Dorsolateral prefrontal cortex (tissue), 120 donors: ENCODE measurements at regions of chr14 and their contacts with region 1.

Region 1: DNA sequence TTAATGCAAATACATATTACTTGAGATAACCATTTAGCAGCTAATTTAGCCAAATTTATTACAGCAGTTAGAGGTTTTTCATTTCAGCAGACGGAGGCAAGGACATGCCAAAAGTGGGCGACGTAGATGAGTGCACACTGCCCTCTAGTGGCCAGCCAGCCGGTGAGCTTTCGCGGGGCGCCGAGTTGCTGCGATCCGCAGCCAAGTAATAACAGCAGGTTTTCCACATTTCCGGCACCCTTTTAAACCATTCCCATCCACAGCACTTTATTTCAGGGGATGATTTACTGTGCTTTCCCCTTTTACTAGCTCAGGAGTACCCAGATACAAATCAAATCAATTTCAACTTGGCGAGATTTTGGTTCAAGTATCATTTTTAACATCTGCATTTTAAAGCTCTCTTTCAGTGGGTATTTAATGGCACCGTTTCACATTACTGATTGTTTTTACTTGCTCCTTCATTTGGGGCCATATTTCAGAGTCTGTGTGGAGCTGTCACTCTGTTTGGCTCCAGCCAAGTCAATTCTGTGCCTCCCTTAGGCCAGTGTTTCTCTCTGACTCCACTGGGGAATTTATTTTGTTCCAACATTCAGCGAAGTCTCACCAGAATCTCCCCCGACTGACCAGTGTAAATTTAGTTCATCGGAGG is 158.0 kb downstream of the EGLN3 start:
- DNase-seq: peak; percentile 76 to 91 (median 84)
- H3K4me3 ChIP-seq: peak overlapping the region; percentile 14 to 65 (median 44)
- H3K27ac ChIP-seq: peak overlapping the region in 56 of 59 donors; percentile 2 to 89 (median 73)
- H3K27me3 ChIP-seq: no peaks in the 10 kb centered on the region
- CTCF ChIP-seq: peak; percentile 85 to 98 (median 96)

Region 2: DNA sequence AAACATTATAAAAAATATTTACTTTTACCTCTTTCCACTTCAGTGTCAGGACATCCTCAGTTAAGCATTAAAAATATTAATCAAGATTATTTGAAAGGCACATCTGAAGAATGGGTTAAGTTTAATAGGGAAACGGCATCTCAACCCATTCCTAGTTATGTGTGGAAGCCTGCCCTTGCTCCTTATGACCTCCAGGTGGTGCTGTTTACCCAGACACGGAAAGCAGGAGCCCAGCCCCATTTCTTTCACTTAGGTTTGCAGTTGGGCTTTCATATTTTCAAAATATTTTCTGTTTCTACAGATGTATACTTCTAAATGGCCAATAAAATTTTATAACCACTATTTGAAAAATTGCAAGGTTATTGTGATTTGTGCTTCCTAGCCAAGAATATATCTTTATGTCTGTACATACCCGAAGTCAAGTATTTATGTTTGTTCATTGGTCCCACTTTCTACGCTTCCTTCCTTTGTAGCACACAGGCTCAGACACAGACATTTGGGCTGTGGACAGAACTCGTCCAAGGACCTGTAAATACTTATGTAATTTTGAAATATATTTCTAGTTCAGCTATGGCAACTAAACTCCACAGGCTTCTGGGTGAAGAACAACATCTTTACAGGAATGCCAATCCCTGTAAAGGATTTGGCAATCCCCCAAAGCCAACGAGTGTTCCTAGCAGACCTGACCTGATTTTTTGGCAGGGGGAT is 1216.6 kb before region 1 on chr14:
- intact Hi-C with region 1: loop called (anchors 2 to 10 kb)
- DNase-seq: peak in 9 of 10 donors; percentile 31 to 72 (median 52)
- H3K4me3 ChIP-seq: peak overlapping the region in 36 of 59 donors; percentile 3 to 56 (median 32)
- H3K27ac ChIP-seq: peak overlapping the region in 48 of 59 donors; percentile 1 to 84 (median 60)
- H3K27me3 ChIP-seq: no peaks in the 10 kb centered on the region
- CTCF ChIP-seq: peak; percentile 91 to 99 (median 97)

Region 3: DNA sequence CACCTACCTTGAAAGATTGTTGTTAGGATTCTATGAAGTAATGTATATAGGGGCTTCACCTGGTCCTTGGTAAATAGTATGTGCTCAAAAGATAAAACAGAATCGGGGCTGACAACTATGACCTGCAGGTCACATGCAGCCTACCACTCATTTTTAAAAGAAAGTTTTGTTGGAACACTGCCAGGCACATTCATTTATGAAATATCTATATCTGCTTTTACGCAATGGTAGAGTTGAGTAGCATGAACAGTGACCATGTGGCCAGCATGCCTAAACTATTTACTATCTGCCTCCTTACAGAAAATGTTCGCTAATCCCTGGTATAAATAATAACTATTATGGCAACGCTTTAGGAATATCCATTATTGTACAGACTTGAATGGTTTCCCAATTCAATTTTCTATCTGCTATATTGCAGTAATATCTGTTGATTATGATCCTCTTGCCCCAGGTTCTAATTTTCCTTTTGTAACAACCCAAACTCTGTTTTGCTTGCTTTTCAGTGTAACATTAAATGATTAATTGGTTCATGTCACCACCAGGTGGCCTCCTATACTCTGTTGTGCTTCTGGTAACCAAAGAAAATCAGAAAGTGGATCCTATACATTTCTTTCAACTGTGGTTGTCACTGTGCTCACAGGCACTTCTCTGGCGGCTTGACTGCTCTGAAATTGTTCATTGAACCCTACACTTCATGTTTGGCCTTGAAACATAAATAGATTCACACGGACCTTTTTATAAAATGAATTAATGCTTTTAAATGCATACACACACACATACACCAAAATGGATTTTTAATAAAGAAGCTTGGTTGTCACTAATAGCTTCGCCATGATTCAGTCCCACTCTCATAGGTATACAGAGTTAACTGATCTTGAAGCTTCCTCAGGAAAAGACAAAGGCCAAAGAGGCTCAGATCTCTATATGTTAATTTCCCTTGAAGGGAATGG is 1081.8 kb before region 1 on chr14:
- intact Hi-C with region 1: loop called in 1 of 2 experiments (anchors 10 kb)
- DNase-seq: peak in 3 of 10 donors; percentile 25 to 62 (median 40)
- H3K4me3 ChIP-seq: peak overlapping the region in 50 of 59 donors; percentile 0 to 56 (median 28)
- H3K27ac ChIP-seq: peak overlapping the region in 58 of 59 donors; percentile 5 to 91 (median 80)
- H3K27me3 ChIP-seq: no peaks in the 10 kb centered on the region
- CTCF ChIP-seq: peak; percentile 54 to 88 (median 72)

Region 4: GRCh38 chr14:33184587-33184986 is 608.3 kb before region 1 on chr14:
- intact Hi-C with region 1: loop called in 1 of 2 experiments (anchors 5 kb)
- DNase-seq: peak in 1 of 10 donors; percentile 19
- H3K4me3 ChIP-seq: no peak overlapping the region
- H3K27ac ChIP-seq: no peak overlapping the region
- H3K27me3 ChIP-seq: no peaks in the 10 kb centered on the region
- CTCF ChIP-seq: peak in 42 of 56 donors; percentile 12 to 62 (median 37)

Region 5: GRCh38 chr14:33432407-33433023 is 360.3 kb before region 1 on chr14:
- intact Hi-C with region 1: loop called in 1 of 2 experiments (anchors 5 kb)
- DNase-seq: peak in 2 of 10 donors; percentile 42 to 49
- H3K4me3 ChIP-seq: no peak overlapping the region
- H3K27ac ChIP-seq: no peak overlapping the region
- H3K27me3 ChIP-seq: no peaks in the 10 kb centered on the region
- CTCF ChIP-seq: peak in 54 of 56 donors; percentile 5 to 74 (median 54)

Region 6: DNA sequence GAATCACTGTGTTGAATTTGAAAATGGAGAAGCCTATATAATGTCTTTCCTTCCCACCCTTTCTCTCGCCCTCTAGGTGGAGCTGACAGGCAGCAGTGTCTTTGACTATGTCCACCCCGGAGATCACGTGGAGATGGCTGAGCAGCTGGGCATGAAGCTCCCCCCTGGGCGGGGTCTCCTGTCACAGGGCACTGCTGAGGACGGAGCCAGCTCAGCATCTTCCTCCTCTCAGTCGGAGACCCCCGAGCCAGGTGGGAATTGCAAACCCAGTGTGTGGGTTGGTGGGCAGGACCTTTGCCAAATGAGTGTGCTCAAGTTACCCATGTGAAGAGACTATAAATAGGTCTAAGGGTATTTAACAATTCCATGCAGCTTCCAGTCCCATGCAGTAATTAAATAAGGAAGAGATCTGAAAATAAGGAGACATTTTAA is 116.7 kb before region 1 on chr14:
- intact Hi-C with region 1: loop called in 1 of 2 experiments (anchors 5 kb)
- DNase-seq: peak in 9 of 10 donors; percentile 24 to 67 (median 58)
- H3K4me3 ChIP-seq: peak overlapping the region in 50 of 59 donors; percentile 1 to 53 (median 32)
- H3K27ac ChIP-seq: peak overlapping the region in 38 of 59 donors; percentile 0 to 75 (median 46)
- H3K27me3 ChIP-seq: no peaks in the 10 kb centered on the region
- CTCF ChIP-seq: peak; percentile 26 to 73 (median 56)

Region 7: DNA sequence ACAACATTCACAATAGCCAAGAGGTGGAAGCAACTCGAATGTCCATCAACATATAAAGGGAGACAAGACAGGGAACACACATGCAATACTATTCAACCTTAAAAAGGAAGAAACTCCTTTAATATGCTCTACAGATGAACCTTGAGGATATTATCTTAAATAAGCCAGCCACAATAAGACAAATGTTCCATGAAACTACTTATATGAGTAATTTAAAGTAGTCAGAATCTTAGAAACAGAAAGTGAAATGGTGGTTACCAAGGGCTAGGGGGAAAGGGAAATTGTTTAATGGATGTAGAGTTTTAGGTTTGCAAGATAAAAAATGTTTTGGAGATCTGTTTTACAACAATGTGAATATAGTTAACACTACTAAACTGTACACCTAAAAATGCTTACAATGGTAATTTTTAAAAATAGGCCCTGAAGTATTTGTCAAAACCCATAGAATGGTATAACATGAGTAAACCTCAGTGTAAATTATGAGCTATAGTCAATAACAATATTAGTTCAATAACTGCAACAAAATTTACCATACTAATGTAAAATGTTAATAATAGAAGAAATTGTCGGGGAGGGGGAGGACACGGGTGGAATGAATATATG is 86.9 kb after region 1 on chr14:
- intact Hi-C with region 1: no loop called
- DNase-seq: no peak
- H3K4me3 ChIP-seq: no peak overlapping the region
- H3K27ac ChIP-seq: no peak overlapping the region
- H3K27me3 ChIP-seq: no peaks in the 10 kb centered on the region
- CTCF ChIP-seq: no peak